Calu3 (cell line): ENCODE measurements at regions of chr9 and their contacts with region 1.

Region 1: DNA sequence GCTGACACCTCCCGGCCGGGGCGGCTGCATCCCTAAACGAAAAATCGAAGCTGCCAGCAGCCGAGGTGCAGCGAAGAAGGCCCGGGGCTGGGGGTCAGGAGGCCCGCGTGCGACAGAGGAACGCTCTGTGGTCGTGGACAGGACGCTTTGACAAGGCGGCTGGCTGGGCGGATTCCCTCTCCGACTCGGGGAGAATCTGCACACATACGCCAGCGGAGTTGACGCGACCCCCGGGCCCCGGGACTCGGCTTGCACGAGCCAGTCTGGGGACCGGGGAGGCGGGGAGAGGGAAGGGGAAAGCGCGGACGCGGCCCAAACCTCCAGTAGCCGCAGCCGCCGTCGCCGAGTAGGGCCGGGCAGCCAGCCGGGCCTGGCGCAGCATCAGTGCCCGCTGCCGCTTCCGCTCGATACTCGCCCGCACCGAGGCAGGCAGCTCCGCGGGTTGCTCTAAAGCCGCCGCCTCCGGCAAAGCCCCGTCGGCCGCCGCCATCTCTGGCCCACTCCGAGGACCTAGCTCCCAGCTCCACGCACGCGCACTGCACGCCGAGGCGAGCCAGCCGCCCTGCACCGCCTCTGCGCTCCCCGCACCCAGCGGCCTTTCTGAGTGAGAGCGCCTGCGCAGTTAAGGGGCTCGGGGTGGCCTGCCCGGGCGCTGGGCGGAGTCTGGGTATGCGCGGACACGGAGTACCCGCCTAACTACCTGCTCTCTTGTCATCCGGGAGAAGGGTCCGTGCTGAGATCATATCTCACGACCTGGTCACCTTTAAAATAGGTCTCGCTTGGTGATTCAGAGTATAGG is at the start of gene XPA:
- DNase-seq: peak; percentile 95
- H3K4me3 Mint-ChIP-seq: peak within 1 kb of the TSS; percentile 80
- H3K27ac Mint-ChIP-seq: no peak within 1 kb of the TSS
- H3K4me1 Mint-ChIP-seq: peaks cover 47% of the 10 kb centered on the region
- H3K27me3 Mint-ChIP-seq: no peaks in the 10 kb centered on the region
- CTCF ChIP-seq: no peak
- total RNA-seq, gene XPA: 5.4 and 5.9 TPM in 2 replicates

Region 2: DNA sequence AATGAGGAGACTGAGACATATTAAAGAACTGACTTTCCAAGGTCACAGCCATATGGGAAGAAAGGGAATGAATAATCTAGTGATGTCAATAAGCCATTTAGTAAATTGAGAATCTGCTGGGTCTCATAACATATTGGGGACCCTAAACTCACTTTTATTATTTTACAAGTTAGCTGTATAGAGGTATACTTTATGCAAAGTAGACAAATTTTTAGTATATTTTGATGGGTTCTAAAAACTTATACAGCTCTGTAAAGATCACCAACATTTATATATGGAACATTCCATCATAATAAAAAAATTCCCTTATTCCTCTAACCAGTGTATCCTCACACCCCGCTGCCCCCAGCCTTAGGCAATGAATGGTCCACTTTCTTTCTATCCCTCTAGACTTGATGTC is 883.4 kb before region 1 on chr9:
- CTCF ChIA-PET with region 1: no interaction called
- intact Hi-C with region 1: no loop called
- DNase-seq: no peak
- H3K4me3 Mint-ChIP-seq: no peak overlapping the region
- H3K27ac Mint-ChIP-seq: no peak overlapping the region
- H3K4me1 Mint-ChIP-seq: no peaks in the 10 kb centered on the region
- H3K27me3 Mint-ChIP-seq: no peaks in the 10 kb centered on the region
- CTCF ChIP-seq: no peak

Region 3: DNA sequence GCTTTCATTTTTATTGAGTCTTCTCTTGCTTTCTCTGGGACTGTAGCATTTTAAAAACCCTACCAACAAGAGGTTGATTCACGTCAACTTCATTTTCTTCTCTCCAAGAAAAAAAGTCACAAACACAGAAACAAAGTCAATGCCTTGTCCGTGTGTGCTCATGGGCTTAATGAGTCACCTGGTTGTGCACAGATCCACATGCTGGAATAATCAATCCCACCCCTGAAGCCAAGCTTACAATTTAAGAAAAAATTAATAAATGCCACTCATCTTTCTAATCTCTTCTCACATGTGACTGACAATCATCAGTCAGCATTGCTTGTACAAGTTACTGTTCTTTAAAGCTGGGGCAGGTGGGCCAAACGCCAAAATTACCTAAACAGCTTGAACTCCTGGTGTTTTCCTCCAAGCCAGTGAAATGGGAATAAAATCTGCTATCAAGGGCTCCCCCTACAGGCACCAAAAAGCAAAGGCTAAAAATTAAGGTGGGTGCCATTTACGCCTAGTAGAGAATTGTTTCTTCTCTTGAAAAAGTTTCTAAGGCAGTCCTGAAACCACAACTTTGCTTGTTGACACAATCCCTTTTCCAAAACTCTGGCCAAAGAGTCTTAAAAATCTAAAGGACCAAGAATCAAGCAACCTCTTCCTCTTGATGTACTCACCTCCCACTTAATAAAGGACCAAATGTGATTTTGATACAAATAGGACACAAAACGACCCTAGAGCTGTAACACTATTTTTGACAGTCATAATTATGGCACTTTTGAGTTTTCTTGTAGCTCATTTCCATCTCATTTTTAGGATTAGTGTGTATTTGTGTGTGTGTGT is 203.9 kb after region 1 on chr9:
- CTCF ChIA-PET with region 1: interaction called, 7 read pairs
- intact Hi-C with region 1: loop called (anchors 5 kb)
- DNase-seq: peak; percentile 34
- H3K4me3 Mint-ChIP-seq: no peak overlapping the region
- H3K27ac Mint-ChIP-seq: no peak overlapping the region
- H3K4me1 Mint-ChIP-seq: no peaks in the 10 kb centered on the region
- H3K27me3 Mint-ChIP-seq: no peaks in the 10 kb centered on the region
- CTCF ChIP-seq: peak; percentile 65